PC-9 (cell line): ENCODE measurements at regions of chr5 and their contacts with region 1.

Region 1: GRCh38 chr5:154214371-154215106 is 24.0 kb downstream of the GALNT10 start:
- DNase-seq: peak in 1 of 2 experiments; percentile 83
- H3K4me3 ChIP-seq: no peak overlapping the region
- H3K27ac ChIP-seq: peak overlapping the region; percentile 79
- H3K4me1 ChIP-seq: peaks cover 74% of the 10 kb centered on the region
- H3K27me3 ChIP-seq: no peaks in the 10 kb centered on the region
- CTCF ChIP-seq: no peak

Region 2: GRCh38 chr5:154308443-154309370 is 94.2 kb after region 1 on chr5:
- CTCF ChIA-PET with region 1: no interaction called
- POLR2A ChIA-PET with region 1: no interaction called
- intact Hi-C with region 1: loop called (anchors 1 kb)
- DNase-seq: peak in 1 of 2 experiments; percentile 79
- H3K4me3 ChIP-seq: no peak overlapping the region
- H3K27ac ChIP-seq: peak overlapping the region; percentile 60
- H3K4me1 ChIP-seq: peaks cover 73% of the 10 kb centered on the region
- H3K27me3 ChIP-seq: no peaks in the 10 kb centered on the region
- CTCF ChIP-seq: no peak